MCF 10A (cell line): ENCODE measurements at regions of chr17 and their contacts with region 1.

Region 1: DNA sequence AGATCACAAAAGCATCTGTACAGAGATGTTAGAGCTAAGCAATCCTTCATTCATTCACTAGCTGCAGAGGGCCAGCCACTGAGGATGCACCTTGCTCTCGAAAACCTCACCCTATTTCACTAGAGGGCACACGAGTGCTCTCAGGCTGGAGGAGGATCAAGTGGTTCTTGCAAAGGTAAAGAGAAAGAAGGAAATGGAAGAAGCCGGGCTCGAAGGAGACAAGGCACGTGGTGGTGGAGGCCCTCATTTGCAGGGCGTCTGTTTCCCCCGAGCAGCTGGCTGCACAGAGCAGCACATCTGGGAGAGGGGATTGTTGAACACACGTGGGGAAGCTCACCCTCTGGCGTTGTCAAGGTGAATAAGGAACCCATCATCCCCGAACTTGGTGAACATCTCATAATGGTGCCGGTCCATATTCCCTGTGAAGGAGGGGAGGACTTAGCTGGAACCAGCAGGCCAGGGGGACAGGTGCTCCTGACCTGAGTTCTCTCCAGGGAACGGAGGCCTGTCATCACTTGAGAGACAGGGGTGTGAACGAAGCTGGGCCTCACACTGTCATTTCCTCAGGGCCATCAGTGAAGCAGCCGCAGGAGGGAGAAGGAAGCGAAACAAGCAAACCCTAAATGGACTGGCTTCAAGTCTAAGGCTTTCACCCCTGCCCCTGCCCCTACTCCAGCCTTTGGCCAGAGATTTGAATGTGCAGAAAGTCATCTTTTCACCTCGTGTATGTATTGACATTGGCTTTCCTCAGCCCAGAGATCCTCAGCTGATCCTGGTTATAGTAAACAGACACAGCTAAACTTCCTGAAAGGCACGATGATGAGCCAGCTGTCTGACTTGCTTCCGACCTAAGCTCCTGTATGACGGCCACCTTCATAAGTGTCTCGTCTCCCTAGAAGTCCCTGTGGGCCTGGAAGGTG is 27.6 kb downstream of the PRKAR1A start:
- DNase-seq: no peak
- H3K4me3 Mint-ChIP-seq: no peak overlapping the region
- H3K27ac Mint-ChIP-seq: no peak overlapping the region
- H3K4me1 Mint-ChIP-seq: peaks cover 6% of the 10 kb centered on the region
- H3K27me3 Mint-ChIP-seq: no peaks in the 10 kb centered on the region
- CTCF ChIP-seq: no peak

Region 2: DNA sequence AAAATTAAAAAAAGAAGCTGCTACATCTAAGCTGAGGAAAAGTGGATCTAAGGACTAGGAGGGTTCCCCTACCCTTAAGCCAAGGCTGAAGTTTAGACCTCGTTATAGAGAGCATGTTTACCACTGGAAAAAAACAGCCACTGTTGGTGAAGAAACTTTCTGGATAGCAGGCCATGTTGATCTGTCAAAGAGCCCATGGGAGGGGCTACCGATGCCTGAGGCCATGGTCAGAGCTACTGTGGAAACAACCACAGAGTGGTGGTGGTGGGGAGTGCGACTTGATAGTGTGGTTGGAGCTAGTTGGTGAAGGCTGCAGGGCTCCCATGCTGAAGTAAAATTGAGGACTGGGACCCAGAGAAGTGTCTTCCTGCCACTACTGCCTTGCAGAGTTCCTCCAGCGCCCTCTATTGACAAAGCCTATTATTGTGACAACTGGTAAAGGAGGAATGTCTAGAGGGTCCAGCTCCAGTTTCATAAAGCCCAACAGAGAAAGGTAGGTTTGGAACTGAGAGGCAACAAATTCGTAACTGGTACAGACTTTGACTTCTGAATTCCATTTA is 74.0 kb after region 1 on chr17:
- CTCF ChIA-PET with region 1: no interaction called
- POLR2A ChIA-PET with region 1: no interaction called
- intact Hi-C with region 1: loop called (anchors 10 kb)
- DNase-seq: peak; percentile 77
- H3K4me3 Mint-ChIP-seq: no peak overlapping the region
- H3K27ac Mint-ChIP-seq: no peak overlapping the region
- H3K4me1 Mint-ChIP-seq: no peaks in the 10 kb centered on the region
- H3K27me3 Mint-ChIP-seq: no peaks in the 10 kb centered on the region
- CTCF ChIP-seq: peak; percentile 61